Activated CD8-positive, alpha-beta T cell treated with anti-CD3 and anti-CD28 coated beads, Interleukin-2, amount 10 ng/mL, durations not matched to agents 7 days and 5 days (primary cell): ENCODE measurements at regions of chr5 and their contacts with region 1.

Region 1: DNA sequence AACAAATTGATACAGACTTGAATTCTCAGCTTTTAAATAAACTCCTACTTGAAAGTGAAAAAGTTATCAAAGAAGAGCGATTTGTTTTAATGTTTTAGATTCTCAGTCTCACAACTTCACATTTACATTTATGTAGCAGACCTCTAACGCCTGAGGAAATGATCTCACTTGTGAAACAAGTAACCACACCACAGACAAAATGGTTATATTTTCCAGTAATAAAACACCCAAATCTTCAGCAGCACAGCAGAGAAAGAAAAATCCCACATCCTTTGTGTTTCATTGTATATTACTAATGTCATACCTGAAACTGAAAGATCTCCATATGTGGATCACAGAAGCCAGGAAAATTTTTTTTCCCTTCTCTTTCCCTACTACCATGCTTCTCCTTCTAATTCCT is 29.8 kb upstream of the GZMA start:
- DNase-seq: peak; percentile 36
- ATAC-seq: peak; percentile 90
- H3K4me3 Mint-ChIP-seq: peak overlapping the region; percentile 60
- H3K27ac Mint-ChIP-seq: peak overlapping the region; percentile 87
- H3K4me1 Mint-ChIP-seq: peaks cover 60% of the 10 kb centered on the region
- H3K27me3 Mint-ChIP-seq: no peaks in the 10 kb centered on the region

Region 2: GRCh38 chr5:55096861-55097260 is 24.2 kb after region 1 on chr5:
- CTCF ChIA-PET with region 1: interaction called, 11 read pairs
- POLR2A ChIA-PET with region 1: interaction called, 7 read pairs
- DNase-seq: peak; percentile 78
- ATAC-seq: peak; percentile 54
- H3K4me3 Mint-ChIP-seq: peak overlapping the region; percentile 12
- H3K27ac Mint-ChIP-seq: peak overlapping the region; percentile 83
- H3K4me1 Mint-ChIP-seq: peaks cover 91% of the 10 kb centered on the region
- H3K27me3 Mint-ChIP-seq: no peaks in the 10 kb centered on the region